Activated CD8-positive, alpha-beta T cell treated with anti-CD3 and anti-CD28 coated beads for 36 hours (primary cell): ENCODE measurements at regions of chr1 and their contacts with region 1.

Region 1: GRCh38 chr1:181166377-181167196 is 78.1 kb downstream of the IER5 start:
- DNase-seq: peak; percentile 88
- ATAC-seq: peak; percentile 100
- H3K4me3 Mint-ChIP-seq: no peak overlapping the region
- H3K27ac Mint-ChIP-seq: peak overlapping the region; percentile 71
- H3K4me1 Mint-ChIP-seq: peaks cover 4% of the 10 kb centered on the region
- H3K27me3 Mint-ChIP-seq: no peaks in the 10 kb centered on the region
- CTCF ChIP-seq: peak; percentile 92

Region 2: DNA sequence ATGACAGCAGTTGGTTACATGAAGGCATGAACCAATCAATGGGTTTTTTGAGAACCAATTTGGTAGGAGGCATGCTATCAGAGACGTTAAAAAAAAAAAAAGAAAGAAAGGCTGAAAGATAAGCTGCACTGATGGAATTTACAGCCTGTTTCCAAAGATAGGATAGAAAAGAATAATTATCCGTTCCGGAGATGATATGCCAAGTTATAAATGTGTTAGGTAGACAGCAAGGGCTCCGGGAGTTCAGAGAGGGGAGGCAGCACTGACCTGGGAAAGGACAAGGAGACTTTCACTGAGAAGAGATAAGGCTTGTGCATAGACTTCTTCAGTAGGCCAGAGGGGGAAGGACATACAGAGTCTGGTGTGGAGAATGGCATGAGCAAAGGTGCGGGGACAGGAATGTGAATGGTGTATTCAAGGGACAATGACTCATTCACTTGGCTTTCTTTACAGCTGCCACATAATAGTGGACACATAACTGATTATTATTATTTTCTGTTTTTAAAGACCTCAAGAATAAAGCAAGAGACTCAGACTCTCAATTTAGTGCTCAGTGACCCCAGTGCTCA is 639.4 kb before region 1 on chr1:
- CTCF ChIA-PET with region 1: no interaction called
- POLR2A ChIA-PET with region 1: no interaction called
- intact Hi-C with region 1: loop called (anchors 10 kb)
- DNase-seq: no peak
- ATAC-seq: no peak
- H3K4me3 Mint-ChIP-seq: no peak overlapping the region
- H3K27ac Mint-ChIP-seq: no peak overlapping the region
- H3K4me1 Mint-ChIP-seq: no peaks in the 10 kb centered on the region
- H3K27me3 Mint-ChIP-seq: no peaks in the 10 kb centered on the region
- CTCF ChIP-seq: no peak

Region 3: GRCh38 chr1:180881806-180882509 is 284.6 kb before region 1 on chr1:
- CTCF ChIA-PET with region 1: interaction called, 34 read pairs
- POLR2A ChIA-PET with region 1: no interaction called
- intact Hi-C with region 1: loop called (anchors 2 kb)
- DNase-seq: no peak
- ATAC-seq: peak; percentile 65
- H3K4me3 Mint-ChIP-seq: no peak overlapping the region
- H3K27ac Mint-ChIP-seq: peak overlapping the region; percentile 33
- H3K4me1 Mint-ChIP-seq: peaks cover 7% of the 10 kb centered on the region
- H3K27me3 Mint-ChIP-seq: no peaks in the 10 kb centered on the region
- CTCF ChIP-seq: peak; percentile 56

Region 4: GRCh38 chr1:181112071-181112929 is 54.3 kb before region 1 on chr1:
- CTCF ChIA-PET with region 1: no interaction called
- POLR2A ChIA-PET with region 1: no interaction called
- intact Hi-C with region 1: no loop called
- DNase-seq: no peak
- ATAC-seq: no peak
- H3K4me3 Mint-ChIP-seq: no peak overlapping the region
- H3K27ac Mint-ChIP-seq: no peak overlapping the region
- H3K4me1 Mint-ChIP-seq: peaks cover 5% of the 10 kb centered on the region
- H3K27me3 Mint-ChIP-seq: peaks cover 9% of the 10 kb centered on the region
- CTCF ChIP-seq: no peak

Region 5: DNA sequence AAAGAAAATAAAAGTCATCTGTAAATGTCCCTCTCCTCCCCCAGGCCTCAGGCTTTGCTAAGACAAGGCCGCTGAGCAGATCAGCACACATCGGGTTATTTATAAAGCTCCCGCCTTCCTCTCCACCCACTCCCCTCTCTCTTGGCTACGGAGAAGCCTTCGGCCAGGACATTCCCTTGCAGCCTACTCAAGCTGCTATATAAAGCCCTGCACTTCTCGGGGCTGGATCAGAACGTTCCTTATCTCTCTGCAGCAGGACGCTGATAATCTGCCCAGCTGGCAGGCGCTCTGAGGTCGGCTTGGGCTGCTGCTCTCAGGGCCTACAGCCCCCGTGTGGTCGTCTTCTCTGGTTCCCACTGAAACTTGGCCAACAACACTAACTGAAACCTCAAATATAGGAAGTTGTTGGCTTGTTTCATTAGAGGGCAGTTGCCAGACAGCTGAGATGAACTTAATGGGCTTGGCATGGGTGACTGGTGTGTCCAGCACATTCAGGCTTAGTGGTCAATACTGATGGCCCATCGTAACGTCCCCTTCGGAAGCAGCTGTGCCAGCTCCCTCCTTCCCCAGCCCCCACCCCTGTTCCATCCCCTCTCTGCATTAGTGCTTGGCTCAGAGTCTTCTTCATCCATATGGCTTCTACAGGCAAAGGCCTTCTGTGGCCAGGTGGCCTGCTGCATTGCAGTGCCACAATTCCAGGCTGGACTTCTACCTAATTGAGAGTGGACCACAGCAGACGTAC is 13.5 kb before region 1 on chr1:
- CTCF ChIA-PET with region 1: interaction called, 11 read pairs
- POLR2A ChIA-PET with region 1: interaction called, 27 read pairs
- intact Hi-C with region 1: no loop called
- DNase-seq: no peak
- ATAC-seq: no peak
- H3K4me3 Mint-ChIP-seq: no peak overlapping the region
- H3K27ac Mint-ChIP-seq: no peak overlapping the region
- H3K4me1 Mint-ChIP-seq: peaks cover 38% of the 10 kb centered on the region
- H3K27me3 Mint-ChIP-seq: peaks cover 2% of the 10 kb centered on the region
- CTCF ChIP-seq: no peak

Region 6: GRCh38 chr1:181759481-181759880 is 592.9 kb after region 1 on chr1:
- CTCF ChIA-PET with region 1: no interaction called
- POLR2A ChIA-PET with region 1: no interaction called
- intact Hi-C with region 1: no loop called
- DNase-seq: no peak
- ATAC-seq: no peak
- H3K4me3 Mint-ChIP-seq: no peak overlapping the region
- H3K27ac Mint-ChIP-seq: no peak overlapping the region
- H3K4me1 Mint-ChIP-seq: no peaks in the 10 kb centered on the region
- H3K27me3 Mint-ChIP-seq: peaks cover 2% of the 10 kb centered on the region
- CTCF ChIP-seq: no peak